ENCODE measurements at regions of chr22 and their contacts with region 1.

Region 1: GRCh38 chr22:19432133-19432851 is at the start of gene MRPL40:
- DNase-seq: peak; percentile 86 to 97 (median 94)
- H3K4me3 ChIP-seq: peak within 1 kb of the TSS; percentile 64 to 97 (median 90)
- H3K27ac ChIP-seq: peak within 1 kb of the TSS; percentile 79 to 99 (median 97)
- H3K27me3 ChIP-seq: no peaks in the 10 kb centered on the region
- CTCF ChIP-seq: peak in 36 of 56 donors; percentile 1 to 56 (median 31)
- total RNA-seq, gene MRPL40: 13.6 to 32.2 (median 22.6) TPM

Region 2: DNA sequence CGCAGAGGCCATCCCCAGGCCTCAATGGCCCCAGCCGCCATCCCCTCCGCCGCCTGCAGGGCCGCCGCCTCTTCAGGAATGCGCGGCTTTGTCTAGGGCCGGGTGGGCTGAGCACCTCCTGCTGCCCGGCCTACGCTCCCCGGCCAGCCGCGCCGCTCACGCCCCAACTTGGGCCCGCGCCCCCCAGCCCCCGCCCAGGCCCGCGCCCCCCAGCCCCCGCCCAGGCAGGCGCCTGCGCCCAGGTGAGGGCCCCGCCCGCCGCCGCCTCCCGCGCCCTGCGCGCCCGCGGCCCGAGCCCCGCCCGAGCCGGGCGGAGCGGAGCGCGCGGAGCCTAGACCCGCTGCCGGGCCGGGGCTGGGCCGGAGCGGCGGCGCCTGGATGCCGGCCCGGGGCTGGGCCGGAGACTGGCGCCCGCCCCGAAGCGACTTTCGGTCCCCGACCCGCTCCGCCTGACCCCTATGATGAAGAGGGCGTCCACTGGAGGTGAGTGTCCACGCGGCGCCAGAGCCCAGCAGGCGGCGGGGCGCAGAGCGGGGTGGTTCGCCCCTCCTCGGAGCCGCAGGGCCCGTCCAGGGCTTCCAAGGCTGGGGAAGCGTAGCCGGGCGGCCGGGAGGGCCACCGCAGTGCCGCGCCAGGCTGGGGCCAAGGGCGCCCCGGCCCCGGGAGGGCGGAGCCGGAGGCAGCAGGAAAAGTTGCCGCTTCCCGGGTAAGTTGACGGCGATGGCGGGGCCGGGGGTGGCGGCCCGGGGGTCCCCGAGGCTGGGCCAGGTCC is 461.9 kb before region 1 on chr22:
- intact Hi-C with region 1: no loop called
- DNase-seq: peak in 1 of 10 donors; percentile 49
- H3K4me3 ChIP-seq: peak overlapping the region; percentile 29 to 84 (median 67)
- H3K27ac ChIP-seq: peak overlapping the region in 48 of 59 donors; percentile 15 to 89 (median 70)
- H3K27me3 ChIP-seq: peaks cover 0 to 9% (median 0%) of the 10 kb centered on the region in 45 donors
- CTCF ChIP-seq: no peak

Region 3: DNA sequence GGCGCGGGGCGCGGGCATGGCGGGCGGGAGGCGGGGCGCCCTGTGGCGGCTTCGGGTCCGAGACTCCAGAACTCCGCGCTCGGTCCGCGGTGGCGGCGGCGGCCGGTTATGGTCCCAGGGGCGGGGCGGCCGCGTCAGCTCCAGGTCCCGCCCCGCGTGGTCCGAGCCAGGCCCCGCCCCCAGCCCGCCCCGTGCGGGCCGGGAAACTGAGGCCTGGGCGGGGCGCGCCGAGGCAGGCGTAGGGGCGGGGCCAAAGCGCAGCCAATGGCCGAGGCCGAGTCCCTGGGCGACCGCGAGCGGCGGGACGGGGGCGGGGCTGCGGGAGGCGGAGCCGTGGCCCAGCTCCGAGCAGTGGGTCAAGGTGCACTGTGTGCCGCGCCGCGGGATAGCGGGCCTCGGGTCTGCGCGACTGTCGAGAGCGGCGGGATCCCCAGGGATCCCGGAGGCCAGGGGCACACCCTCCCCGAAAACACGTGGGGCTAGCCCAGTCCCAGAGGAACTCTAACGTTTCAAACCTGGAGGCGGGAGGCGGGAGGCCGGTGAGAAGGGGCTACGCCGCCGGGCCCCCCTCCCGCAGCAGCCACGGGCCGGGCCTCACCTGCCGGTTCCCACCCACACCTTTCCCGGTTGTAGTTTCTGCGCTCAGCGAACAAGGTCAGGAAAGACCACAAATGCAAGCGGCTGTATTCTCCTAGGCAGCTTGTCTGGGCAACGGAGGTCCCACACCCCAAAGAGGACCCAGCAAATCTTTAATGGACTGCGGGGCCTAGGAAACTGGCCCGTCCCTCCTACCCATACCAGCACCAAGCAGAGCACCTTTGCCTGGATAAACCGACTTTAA is 253.4 kb before region 1 on chr22 and contains the start of gene SLC25A1:
- intact Hi-C with region 1: loop called in 1 of 2 experiments (anchors 2 kb)
- DNase-seq: peak; percentile 84 to 96 (median 90)
- H3K4me3 ChIP-seq: peak within 1 kb of the TSS; percentile 55 to 96 (median 82)
- H3K27ac ChIP-seq: peak within 1 kb of the TSS in 58 of 59 donors; percentile 22 to 93 (median 81)
- H3K27me3 ChIP-seq: no peaks in the 10 kb centered on the region
- CTCF ChIP-seq: no peak
- total RNA-seq, gene SLC25A1: 20.9 to 57.4 (median 34.4) TPM

Region 4: GRCh38 chr22:19447388-19448075 is 15.2 kb after region 1 on chr22 and contains the start of gene C22orf39:
- intact Hi-C with region 1: loop called (anchors 2 kb)
- DNase-seq: peak; percentile 90 to 97 (median 95)
- H3K4me3 ChIP-seq: peak within 1 kb of the TSS; percentile 63 to 99 (median 93)
- H3K27ac ChIP-seq: peak within 1 kb of the TSS; percentile 21 to 97 (median 87)
- H3K27me3 ChIP-seq: no peaks in the 10 kb centered on the region
- CTCF ChIP-seq: peak in 12 of 56 donors; percentile 6 to 39 (median 20)
- total RNA-seq, gene C22orf39: 37.4 to 76.4 (median 59.4) TPM

Region 5: GRCh38 chr22:19479357-19480172 is 47.3 kb after region 1 on chr22 and contains the start of gene CDC45:
- intact Hi-C with region 1: loop called in 1 of 2 experiments (anchors 5 kb)
- DNase-seq: peak; percentile 88 to 98 (median 97)
- H3K4me3 ChIP-seq: peak within 1 kb of the TSS; percentile 74 to 100 (median 92)
- H3K27ac ChIP-seq: peak within 1 kb of the TSS; percentile 92 to 100 (median 99)
- H3K27me3 ChIP-seq: no peaks in the 10 kb centered on the region
- CTCF ChIP-seq: peak in 13 of 56 donors; percentile 5 to 38 (median 21)
- total RNA-seq, gene CDC45: 0.28 to 1.9 (median 0.81) TPM in 39 of 120 experiments, not detected in the others

Region 6: GRCh38 chr22:19524170-19525115 is 92.2 kb after region 1 on chr22 and contains the start of gene CLDN5:
- intact Hi-C with region 1: no loop called
- DNase-seq: peak in 1 of 10 donors; percentile 44
- H3K4me3 ChIP-seq: peak within 1 kb of the TSS in 58 of 59 donors; percentile 1 to 64 (median 42)
- H3K27ac ChIP-seq: peak within 1 kb of the TSS in 49 of 59 donors; percentile 7 to 86 (median 69)
- H3K27me3 ChIP-seq: peaks cover 0 to 53% (median 33%) of the 10 kb centered on the region in 45 donors
- CTCF ChIP-seq: no peak
- total RNA-seq, gene CLDN5: 31.2 to 203 (median 75.1) TPM